Naive thymus-derived CD4-positive, alpha-beta T cell (primary cell): ENCODE measurements at regions of chr16 and their contacts with region 1.

Region 1: GRCh38 chr16:57045694-57046381 is 46.5 kb upstream of the CPNE2 start:
- DNase-seq: peak in 2 of 9 donors; percentile 26 to 47
- ATAC-seq: peak; percentile 29
- H3K4me3 ChIP-seq: no peak overlapping the region
- H3K4me3 Mint-ChIP-seq: peak overlapping the region in 6 of 10 donors; percentile 9 to 52 (median 32)
- H3K27ac ChIP-seq: peak overlapping the region; percentile 46
- H3K27ac Mint-ChIP-seq: peak overlapping the region; percentile 60 to 97 (median 89)
- H3K4me1 ChIP-seq: peaks cover 30 to 38% of the 10 kb centered on the region in 2 donors
- H3K4me1 Mint-ChIP-seq: peaks cover 24 to 57% (median 41%) of the 10 kb centered on the region in 7 donors
- H3K27me3 ChIP-seq: no peaks in the 10 kb centered on the region
- H3K27me3 Mint-ChIP-seq: no peaks in the 10 kb centered on the region

Region 2: DNA sequence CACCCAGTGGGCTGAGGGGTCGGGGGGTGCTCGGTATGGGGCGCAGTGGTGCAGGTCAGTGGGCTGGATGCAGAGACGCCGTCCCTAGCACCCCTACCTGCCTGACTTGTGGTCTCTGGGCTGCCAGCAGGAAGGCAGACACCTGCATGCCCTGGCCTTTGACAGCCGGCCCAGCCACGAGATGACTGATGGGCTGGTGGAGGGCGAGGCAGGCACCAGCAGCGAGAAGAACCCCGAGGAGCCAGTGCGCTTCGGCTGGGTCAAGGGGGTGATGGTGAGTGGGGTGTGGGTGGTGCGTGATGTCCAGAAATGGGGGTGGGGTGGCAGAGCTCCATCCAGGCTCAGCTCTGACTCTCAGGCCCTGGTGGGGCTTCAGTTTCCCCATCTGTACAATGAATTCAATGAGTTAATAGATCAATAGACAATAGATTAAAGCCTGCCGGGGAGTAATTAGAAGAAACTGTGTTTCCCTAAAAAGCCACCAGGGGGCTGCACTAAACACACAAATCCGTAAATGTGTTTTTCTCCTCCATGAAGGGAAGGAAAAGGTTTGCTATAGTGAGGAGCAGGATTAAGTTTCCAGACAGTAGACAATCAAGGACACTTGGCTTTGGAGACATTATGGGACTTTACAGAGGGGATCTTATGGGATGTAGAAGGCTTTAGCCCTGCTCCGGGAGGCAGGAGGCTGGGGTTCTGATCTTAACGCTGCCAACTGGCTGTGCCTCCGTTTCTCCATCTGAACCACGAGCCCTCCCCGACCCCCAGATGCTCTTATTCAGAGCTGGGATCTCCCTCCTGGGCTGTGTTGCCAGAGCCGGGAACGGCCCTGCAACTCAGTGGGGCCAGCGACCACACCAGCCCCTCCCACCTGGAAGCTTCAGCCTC is 178.7 kb before region 1 on chr16:
- CTCF ChIA-PET with region 1: no interaction called
- POLR2A ChIA-PET with region 1: no interaction called
- intact Hi-C with region 1: loop called (anchors 1 to 10 kb)
- DNase-seq: peak in 7 of 9 donors; percentile 45 to 68 (median 56)
- ATAC-seq: peak; percentile 55
- H3K4me3 ChIP-seq: no peak overlapping the region
- H3K4me3 Mint-ChIP-seq: no peak overlapping the region
- H3K27ac ChIP-seq: no peak overlapping the region
- H3K27ac Mint-ChIP-seq: peak overlapping the region in 2 of 9 donors; percentile 70 to 82
- H3K4me1 ChIP-seq: peaks cover 0 to 14% of the 10 kb centered on the region in 2 donors
- H3K4me1 Mint-ChIP-seq: peaks cover 0 to 19% (median 16%) of the 10 kb centered on the region in 7 donors
- H3K27me3 ChIP-seq: no peaks in the 10 kb centered on the region
- H3K27me3 Mint-ChIP-seq: no peaks in the 10 kb centered on the region

Region 3: GRCh38 chr16:57000271-57001025 is 45.4 kb before region 1 on chr16:
- CTCF ChIA-PET with region 1: interaction called, 5 read pairs
- POLR2A ChIA-PET with region 1: interaction called, 42 read pairs
- intact Hi-C with region 1: no loop called
- DNase-seq: peak in 1 of 9 donors; percentile 55
- ATAC-seq: peak; percentile 40
- H3K4me3 ChIP-seq: peak overlapping the region; percentile 33
- H3K4me3 Mint-ChIP-seq: peak overlapping the region; percentile 20 to 98 (median 63)
- H3K27ac ChIP-seq: peak overlapping the region; percentile 77
- H3K27ac Mint-ChIP-seq: peak overlapping the region; percentile 74 to 93 (median 91)
- H3K4me1 ChIP-seq: peaks cover 78 to 79% of the 10 kb centered on the region in 2 donors
- H3K4me1 Mint-ChIP-seq: peaks cover 78 to 99% (median 89%) of the 10 kb centered on the region in 7 donors
- H3K27me3 ChIP-seq: no peaks in the 10 kb centered on the region
- H3K27me3 Mint-ChIP-seq: no peaks in the 10 kb centered on the region

Region 4: GRCh38 chr16:57023541-57024249 is 22.1 kb before region 1 on chr16:
- CTCF ChIA-PET with region 1: interaction called, 28 read pairs
- POLR2A ChIA-PET with region 1: interaction called, 172 read pairs
- intact Hi-C with region 1: no loop called
- DNase-seq: peak; percentile 54 to 80 (median 70)
- ATAC-seq: peak; percentile 95
- H3K4me3 ChIP-seq: peak overlapping the region; percentile 25
- H3K4me3 Mint-ChIP-seq: peak overlapping the region; percentile 60 to 87 (median 75)
- H3K27ac ChIP-seq: peak overlapping the region; percentile 68
- H3K27ac Mint-ChIP-seq: peak overlapping the region; percentile 77 to 94 (median 90)
- H3K4me1 ChIP-seq: peaks cover 53 to 79% of the 10 kb centered on the region in 2 donors
- H3K4me1 Mint-ChIP-seq: peaks cover 74 to 99% (median 92%) of the 10 kb centered on the region in 7 donors
- H3K27me3 ChIP-seq: no peaks in the 10 kb centered on the region
- H3K27me3 Mint-ChIP-seq: no peaks in the 10 kb centered on the region

Region 5: DNA sequence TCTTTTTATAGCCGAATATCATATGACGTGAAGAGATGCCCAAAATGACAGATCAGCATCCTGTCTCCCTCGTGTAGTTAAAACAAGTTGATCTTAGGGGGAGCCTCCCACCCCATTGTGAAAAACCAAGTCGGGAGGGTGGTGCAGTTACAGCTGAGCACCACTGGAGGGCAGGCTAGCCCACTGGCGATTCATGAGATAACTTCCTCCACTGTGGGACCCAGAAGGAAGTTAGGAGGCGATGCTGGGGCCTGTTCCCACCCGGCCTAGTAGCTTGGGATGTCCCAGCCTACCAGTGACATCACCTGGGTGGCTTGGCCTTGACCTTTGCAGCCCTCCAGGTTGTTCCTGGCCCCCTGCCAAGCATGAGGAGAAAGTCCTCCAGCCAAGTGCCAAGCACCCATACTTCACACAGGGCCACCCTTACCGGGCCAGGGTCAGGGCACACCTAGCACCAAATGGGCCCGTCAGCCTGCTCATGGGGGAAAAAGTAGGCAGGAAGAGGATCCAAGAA is 38.5 kb after region 1 on chr16:
- CTCF ChIA-PET with region 1: interaction called, 4 read pairs
- POLR2A ChIA-PET with region 1: no interaction called
- intact Hi-C with region 1: loop called in 1 of 2 experiments (anchors 5 kb)
- DNase-seq: peak; percentile 52 to 86 (median 80)
- ATAC-seq: peak; percentile 98
- H3K4me3 ChIP-seq: no peak overlapping the region
- H3K4me3 Mint-ChIP-seq: peak overlapping the region in 2 of 10 donors; percentile 3 to 37
- H3K27ac ChIP-seq: peak overlapping the region; percentile 72
- H3K27ac Mint-ChIP-seq: peak overlapping the region; percentile 19 to 97 (median 90)
- H3K4me1 ChIP-seq: peaks cover 11% of the 10 kb centered on the region in 2 donors
- H3K4me1 Mint-ChIP-seq: peaks cover 6 to 16% (median 14%) of the 10 kb centered on the region in 7 donors
- H3K27me3 ChIP-seq: no peaks in the 10 kb centered on the region
- H3K27me3 Mint-ChIP-seq: no peaks in the 10 kb centered on the region